ENCODE measurements at regions of chr6 and their contacts with region 1.

Region 1: GRCh38 chr6:81362246-81362645 is 390.2 kb downstream of the TENT5A start:
- DNase-seq: peak; percentile 18
- H3K4me3 ChIP-seq: no peak overlapping the region
- H3K27ac ChIP-seq: no peak overlapping the region
- H3K27me3 ChIP-seq: no peaks in the 10 kb centered on the region
- CTCF ChIP-seq: no peak

Region 2: GRCh38 chr6:80029470-80029869 is 1332.8 kb before region 1 on chr6:
- CTCF ChIA-PET with region 1: no interaction called
- POLR2A ChIA-PET with region 1: interaction called, 11 read pairs
- DNase-seq: no peak
- H3K4me3 ChIP-seq: no peak overlapping the region
- H3K27ac ChIP-seq: no peak overlapping the region
- H3K27me3 ChIP-seq: no peaks in the 10 kb centered on the region
- CTCF ChIP-seq: no peak

Region 3: DNA sequence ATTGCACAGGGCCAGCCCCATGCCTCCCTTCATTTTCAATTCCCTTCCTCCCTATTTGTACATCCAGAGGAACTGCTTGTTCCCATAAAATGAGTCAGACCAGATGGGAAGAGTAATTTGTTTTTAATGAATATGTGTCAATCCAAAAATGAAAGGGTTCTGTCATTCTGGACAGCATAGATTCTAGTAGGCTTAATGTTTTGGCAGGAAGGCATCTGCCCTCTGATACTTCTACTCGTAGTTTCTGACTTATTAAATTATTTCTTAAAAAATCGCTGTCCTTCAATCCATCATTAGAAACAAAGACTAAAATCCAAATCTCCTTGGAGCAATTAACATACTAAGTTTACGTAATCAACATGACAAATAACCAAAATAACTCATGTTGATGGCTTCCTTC is 275.3 kb before region 1 on chr6:
- CTCF ChIA-PET with region 1: no interaction called
- POLR2A ChIA-PET with region 1: no interaction called
- DNase-seq: no peak
- H3K4me3 ChIP-seq: no peak overlapping the region
- H3K27ac ChIP-seq: no peak overlapping the region
- H3K27me3 ChIP-seq: no peaks in the 10 kb centered on the region
- CTCF ChIP-seq: no peak